Endothelial cell of umbilical vein (primary cell): ENCODE measurements at regions of chr3 and their contacts with region 1.

Region 1: DNA sequence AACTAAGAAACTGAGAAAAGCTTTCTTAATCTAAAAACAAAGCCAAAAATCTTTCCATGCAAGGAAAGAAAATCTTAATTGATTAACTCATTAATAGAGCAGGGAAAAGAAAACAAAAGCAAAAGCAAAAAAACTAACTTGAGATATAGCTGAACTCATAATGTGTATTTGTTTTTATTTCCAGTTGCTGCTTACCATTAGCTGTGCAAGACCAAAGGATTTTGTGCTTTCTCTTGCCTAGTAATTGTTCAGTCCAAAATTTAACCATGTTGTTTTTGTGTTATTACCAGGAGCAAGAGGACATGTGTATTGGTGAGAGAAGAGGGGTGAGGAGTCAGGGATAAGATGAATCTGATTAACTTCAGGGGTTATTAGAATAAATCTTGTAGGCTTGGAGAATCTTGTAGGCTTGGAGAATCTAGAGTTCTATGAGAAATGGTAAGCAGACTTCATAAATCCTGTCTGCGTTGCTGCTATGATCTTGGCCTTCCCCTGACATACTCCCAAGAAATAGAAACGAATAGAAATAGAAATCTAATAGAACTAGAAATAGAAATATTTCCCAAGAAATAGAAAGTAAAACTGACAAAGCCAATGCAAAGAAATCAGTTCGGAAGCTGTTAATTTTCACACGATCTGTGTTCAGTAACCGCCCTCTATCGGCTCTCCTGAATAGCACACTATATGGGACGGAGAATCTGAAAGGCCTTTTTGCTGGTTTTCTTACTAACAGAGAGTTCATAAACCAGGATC is 72.6 kb upstream of the TNFSF10 start:
- DNase-seq: peak; percentile 78
- H3K4me3 ChIP-seq: peak overlapping the region in 2 of 3 experiments; percentile 18 to 53
- H3K27ac ChIP-seq: peak overlapping the region; percentile 19
- H3K4me1 ChIP-seq: peaks cover 16% of the 10 kb centered on the region
- H3K27me3 ChIP-seq: no peaks in the 10 kb centered on the region
- CTCF ChIP-seq: peak; percentile 70 to 73
- POLR2A ChIP-seq: no peak

Region 2: DNA sequence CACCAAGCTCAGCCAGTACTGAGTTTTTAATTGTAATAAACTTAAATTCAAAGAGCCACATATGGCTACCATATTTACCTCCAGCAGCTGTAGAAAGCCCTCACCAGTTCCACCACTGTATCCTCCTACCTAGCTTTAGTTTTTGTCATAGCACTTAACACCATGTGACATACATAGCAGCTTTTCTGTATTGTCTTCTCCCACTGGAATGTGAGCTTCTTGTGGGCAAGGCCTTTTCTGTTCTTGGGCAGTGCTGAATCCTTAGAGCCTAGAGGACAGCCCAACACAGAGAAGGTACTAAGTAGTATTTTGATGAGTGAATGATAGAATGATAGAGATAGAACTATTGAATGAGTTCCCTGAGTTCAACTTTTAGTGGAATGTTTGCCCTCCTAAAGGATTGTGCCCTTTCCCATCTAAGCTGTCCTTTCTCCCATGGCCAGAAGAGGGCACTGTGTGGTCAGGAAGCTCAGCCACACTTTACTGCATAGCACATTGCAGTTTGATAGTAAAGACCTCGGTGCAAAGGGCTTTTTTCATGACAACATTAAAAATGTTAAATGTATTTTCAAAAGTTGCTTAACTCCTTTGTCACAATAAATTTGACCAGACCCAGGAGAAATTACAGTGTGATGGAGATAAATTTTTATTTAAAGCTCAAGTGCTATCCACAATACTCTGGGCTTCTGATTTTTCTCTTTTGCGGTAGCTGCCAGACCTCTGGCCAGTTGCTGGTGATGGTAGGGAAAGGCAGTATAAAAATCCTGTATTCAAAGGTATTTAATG is 263.4 kb before region 1 on chr3:
- CTCF ChIA-PET with region 1: interaction called, 18 read pairs
- POLR2A ChIA-PET with region 1: no interaction called
- dilution Hi-C with region 1: no loop called
- intact Hi-C with region 1: no loop called
- DNase-seq: peak; percentile 70
- H3K4me3 ChIP-seq: no peak overlapping the region
- H3K27ac ChIP-seq: no peak overlapping the region
- H3K4me1 ChIP-seq: no peaks in the 10 kb centered on the region
- H3K27me3 ChIP-seq: no peaks in the 10 kb centered on the region
- CTCF ChIP-seq: peak; percentile 82 to 91
- POLR2A ChIP-seq: no peak

Region 3: GRCh38 chr3:172476347-172476746 is 119.5 kb before region 1 on chr3:
- CTCF ChIA-PET with region 1: interaction called, 27 read pairs
- POLR2A ChIA-PET with region 1: interaction called, 3 read pairs
- dilution Hi-C with region 1: no loop called
- intact Hi-C with region 1: no loop called
- DNase-seq: peak; percentile 12
- H3K4me3 ChIP-seq: peak overlapping the region in 1 of 3 experiments; percentile 38
- H3K27ac ChIP-seq: peak overlapping the region; percentile 78
- H3K4me1 ChIP-seq: peaks cover 14% of the 10 kb centered on the region
- H3K27me3 ChIP-seq: no peaks in the 10 kb centered on the region
- CTCF ChIP-seq: no peak
- POLR2A ChIP-seq: no peak

Region 4: DNA sequence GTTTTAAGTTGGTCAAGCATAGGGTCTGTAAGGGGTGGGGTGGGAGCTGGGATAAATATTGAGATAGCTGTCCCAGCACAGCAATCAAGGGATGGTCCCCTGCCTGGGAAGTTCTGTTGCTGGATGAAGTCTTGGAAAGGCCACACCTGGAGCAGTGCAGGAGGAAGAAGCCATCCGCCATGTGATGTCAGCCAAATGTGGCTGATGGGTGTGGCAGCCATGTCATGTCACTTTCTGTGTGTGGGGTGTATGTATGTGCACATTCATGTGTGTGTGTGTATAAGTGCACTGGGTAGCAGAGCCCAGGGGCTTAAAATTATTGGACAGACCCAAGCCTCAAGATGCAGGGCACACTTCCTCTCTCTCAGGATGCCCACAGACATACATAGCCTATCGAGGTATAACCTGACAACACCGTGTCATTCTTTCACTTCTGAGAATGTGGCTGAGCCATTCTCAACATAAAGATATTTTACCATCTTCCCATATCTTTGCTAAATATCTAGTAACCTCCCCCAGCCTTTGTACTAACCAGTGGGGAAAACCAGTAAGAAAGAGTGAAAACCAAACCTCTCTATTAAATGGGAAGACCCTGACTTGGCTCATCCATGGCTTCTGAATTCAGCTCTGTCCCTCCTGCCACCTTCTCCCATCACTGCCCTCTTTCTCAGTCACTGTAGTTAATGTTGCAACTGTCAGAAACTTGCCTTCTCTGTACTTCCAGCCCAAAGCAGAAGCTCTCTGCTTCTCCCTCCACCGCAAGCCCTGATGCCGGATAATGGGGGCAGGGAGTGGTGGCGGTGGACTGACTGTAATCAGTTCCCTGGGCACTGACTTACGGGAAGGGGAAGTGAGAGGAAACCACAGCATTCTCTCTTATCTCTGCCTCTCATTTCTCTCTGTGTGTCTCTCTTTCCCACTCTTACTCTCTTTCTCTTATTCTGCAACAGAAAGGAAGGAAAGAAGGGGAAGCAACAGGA is 83.7 kb before region 1 on chr3:
- CTCF ChIA-PET with region 1: interaction called, 25 read pairs
- POLR2A ChIA-PET with region 1: no interaction called
- dilution Hi-C with region 1: no loop called
- intact Hi-C with region 1: no loop called
- DNase-seq: peak; percentile 56
- H3K4me3 ChIP-seq: peak overlapping the region in 1 of 3 experiments; percentile 3
- H3K27ac ChIP-seq: peak overlapping the region; percentile 15
- H3K4me1 ChIP-seq: peaks cover 23% of the 10 kb centered on the region
- H3K27me3 ChIP-seq: no peaks in the 10 kb centered on the region
- CTCF ChIP-seq: no peak
- POLR2A ChIP-seq: no peak

Region 5: GRCh38 chr3:172530566-172530965 is 65.3 kb before region 1 on chr3:
- CTCF ChIA-PET with region 1: interaction called, 11 read pairs
- POLR2A ChIA-PET with region 1: no interaction called
- dilution Hi-C with region 1: no loop called
- intact Hi-C with region 1: no loop called
- DNase-seq: peak; percentile 27
- H3K4me3 ChIP-seq: no peak overlapping the region
- H3K27ac ChIP-seq: no peak overlapping the region
- H3K4me1 ChIP-seq: no peaks in the 10 kb centered on the region
- H3K27me3 ChIP-seq: peaks cover 0 to 4% of the 10 kb centered on the region in 2 experiments
- CTCF ChIP-seq: no peak
- POLR2A ChIP-seq: no peak

Region 6: GRCh38 chr3:172607305-172608121 is 11.7 kb after region 1 on chr3:
- CTCF ChIA-PET with region 1: interaction called, 56 read pairs
- POLR2A ChIA-PET with region 1: no interaction called
- dilution Hi-C with region 1: no loop called
- intact Hi-C with region 1: no loop called
- DNase-seq: peak; percentile 94
- H3K4me3 ChIP-seq: no peak overlapping the region
- H3K27ac ChIP-seq: peak overlapping the region; percentile 90
- H3K4me1 ChIP-seq: peaks cover 27% of the 10 kb centered on the region
- H3K27me3 ChIP-seq: no peaks in the 10 kb centered on the region
- CTCF ChIP-seq: no peak
- POLR2A ChIP-seq: no peak

Region 7: DNA sequence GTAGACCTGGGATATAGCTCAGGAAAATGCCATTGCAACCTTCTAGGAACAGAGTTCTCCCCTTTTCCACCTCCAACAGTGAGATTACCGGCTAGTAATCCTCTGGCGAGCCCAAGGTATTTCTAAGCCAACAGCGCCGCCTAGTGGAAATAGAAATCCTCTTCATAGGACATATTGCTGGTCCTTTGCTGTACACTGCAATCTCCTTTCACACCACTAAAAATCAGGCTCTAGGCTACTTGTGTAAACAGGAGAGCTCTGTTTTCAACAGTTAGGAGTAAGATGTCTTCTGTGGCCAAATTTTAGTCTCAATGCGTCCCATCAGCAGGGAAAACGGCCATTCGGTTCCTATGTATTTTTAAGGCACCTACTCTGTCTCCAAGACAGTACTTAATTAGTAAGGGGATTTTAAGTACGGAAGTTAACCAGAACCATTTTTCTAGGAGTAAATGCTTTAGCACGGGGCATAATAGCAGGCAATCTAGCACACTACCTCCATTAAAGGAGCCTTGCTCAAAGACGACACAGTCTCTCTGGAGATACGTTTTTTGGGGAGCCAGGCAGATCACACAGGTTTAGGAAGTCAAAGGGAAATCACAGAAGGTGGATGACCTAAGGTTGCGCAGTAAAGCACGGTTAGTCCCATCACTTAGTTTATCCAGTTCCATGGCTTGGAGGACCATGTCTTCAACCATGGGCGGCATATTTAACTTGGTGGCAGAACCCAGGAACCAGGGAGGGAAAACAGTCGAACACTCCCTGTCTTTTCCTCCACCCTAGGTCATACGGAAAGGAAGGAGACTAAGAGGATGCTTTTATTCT is 71.3 kb after region 1 on chr3:
- CTCF ChIA-PET with region 1: interaction called, 33 read pairs
- POLR2A ChIA-PET with region 1: no interaction called
- dilution Hi-C with region 1: no loop called
- intact Hi-C with region 1: loop called (anchors 1 kb)
- DNase-seq: peak; percentile 85
- H3K4me3 ChIP-seq: no peak overlapping the region
- H3K27ac ChIP-seq: no peak overlapping the region
- H3K4me1 ChIP-seq: peaks cover 6% of the 10 kb centered on the region
- H3K27me3 ChIP-seq: no peaks in the 10 kb centered on the region
- CTCF ChIP-seq: peak; percentile 67 to 84
- POLR2A ChIP-seq: no peak

Region 8: GRCh38 chr3:172701751-172702150 is 105.9 kb after region 1 on chr3:
- CTCF ChIA-PET with region 1: no interaction called
- POLR2A ChIA-PET with region 1: no interaction called
- dilution Hi-C with region 1: no loop called
- intact Hi-C with region 1: no loop called
- DNase-seq: no peak
- H3K4me3 ChIP-seq: no peak overlapping the region
- H3K27ac ChIP-seq: no peak overlapping the region
- H3K4me1 ChIP-seq: no peaks in the 10 kb centered on the region
- H3K27me3 ChIP-seq: no peaks in the 10 kb centered on the region
- CTCF ChIP-seq: no peak
- POLR2A ChIP-seq: no peak

Region 9: GRCh38 chr3:172739462-172739861 is 143.6 kb after region 1 on chr3:
- CTCF ChIA-PET with region 1: no interaction called
- POLR2A ChIA-PET with region 1: no interaction called
- dilution Hi-C with region 1: no loop called
- intact Hi-C with region 1: no loop called
- DNase-seq: no peak
- H3K4me3 ChIP-seq: no peak overlapping the region
- H3K27ac ChIP-seq: no peak overlapping the region
- H3K4me1 ChIP-seq: no peaks in the 10 kb centered on the region
- H3K27me3 ChIP-seq: no peaks in the 10 kb centered on the region
- CTCF ChIP-seq: no peak
- POLR2A ChIP-seq: no peak

Region 10: GRCh38 chr3:173003471-173003870 is 407.7 kb after region 1 on chr3:
- CTCF ChIA-PET with region 1: no interaction called
- POLR2A ChIA-PET with region 1: no interaction called
- dilution Hi-C with region 1: no loop called
- intact Hi-C with region 1: no loop called
- DNase-seq: no peak
- H3K4me3 ChIP-seq: no peak overlapping the region
- H3K27ac ChIP-seq: no peak overlapping the region
- H3K4me1 ChIP-seq: no peaks in the 10 kb centered on the region
- H3K27me3 ChIP-seq: no peaks in the 10 kb centered on the region
- CTCF ChIP-seq: no peak
- POLR2A ChIP-seq: no peak